Heart left ventricle (tissue), 16 donors: ENCODE measurements at regions of chr16 and their contacts with region 1.

Region 1: DNA sequence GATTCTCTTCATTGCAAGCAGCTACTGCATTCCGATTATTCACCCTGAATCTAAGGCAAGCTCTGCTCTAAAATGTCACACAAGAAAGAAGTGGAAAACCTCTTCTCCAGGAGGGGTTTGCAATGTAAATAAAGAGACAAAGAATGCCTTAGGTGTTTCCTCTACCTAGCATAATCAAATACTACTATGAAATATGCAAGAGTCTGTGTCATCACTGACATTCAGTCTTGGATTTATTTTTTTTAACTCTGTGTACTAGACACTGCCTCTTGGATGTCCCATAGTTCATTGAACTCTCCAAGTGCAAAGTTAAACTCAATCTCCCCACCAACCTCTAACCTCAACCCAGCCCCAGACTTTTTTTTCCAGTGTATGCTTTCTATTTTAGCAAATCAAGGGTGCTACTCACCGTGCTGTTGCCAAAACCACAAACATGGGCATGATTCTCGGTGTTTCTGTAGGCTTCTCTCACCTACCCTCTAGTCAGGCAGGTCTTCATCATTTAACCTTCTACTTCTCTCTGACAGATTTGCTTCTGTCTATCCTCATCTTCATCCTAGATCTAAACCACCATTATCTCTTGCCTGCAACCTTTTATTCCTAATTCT is 329.1 kb downstream of the CDH13 start:
- DNase-seq: no peak
- ATAC-seq: no peak
- H3K4me3 ChIP-seq: no peak overlapping the region
- H3K27ac ChIP-seq: no peak overlapping the region
- H3K4me1 ChIP-seq: peaks cover 0 to 8% (median 0%) of the 10 kb centered on the region in 12 donors
- H3K27me3 ChIP-seq: no peaks in the 10 kb centered on the region
- CTCF ChIP-seq: no peak
- POLR2A ChIP-seq: no peak

Region 2: GRCh38 chr16:82801361-82801760 is 154.5 kb before region 1 on chr16:
- intact Hi-C with region 1: no loop called
- DNase-seq: no peak
- ATAC-seq: no peak
- H3K4me3 ChIP-seq: no peak overlapping the region
- H3K27ac ChIP-seq: no peak overlapping the region
- H3K4me1 ChIP-seq: peaks cover 0 to 14% (median 2%) of the 10 kb centered on the region in 12 donors
- H3K27me3 ChIP-seq: no peaks in the 10 kb centered on the region
- CTCF ChIP-seq: no peak
- POLR2A ChIP-seq: no peak

Region 3: DNA sequence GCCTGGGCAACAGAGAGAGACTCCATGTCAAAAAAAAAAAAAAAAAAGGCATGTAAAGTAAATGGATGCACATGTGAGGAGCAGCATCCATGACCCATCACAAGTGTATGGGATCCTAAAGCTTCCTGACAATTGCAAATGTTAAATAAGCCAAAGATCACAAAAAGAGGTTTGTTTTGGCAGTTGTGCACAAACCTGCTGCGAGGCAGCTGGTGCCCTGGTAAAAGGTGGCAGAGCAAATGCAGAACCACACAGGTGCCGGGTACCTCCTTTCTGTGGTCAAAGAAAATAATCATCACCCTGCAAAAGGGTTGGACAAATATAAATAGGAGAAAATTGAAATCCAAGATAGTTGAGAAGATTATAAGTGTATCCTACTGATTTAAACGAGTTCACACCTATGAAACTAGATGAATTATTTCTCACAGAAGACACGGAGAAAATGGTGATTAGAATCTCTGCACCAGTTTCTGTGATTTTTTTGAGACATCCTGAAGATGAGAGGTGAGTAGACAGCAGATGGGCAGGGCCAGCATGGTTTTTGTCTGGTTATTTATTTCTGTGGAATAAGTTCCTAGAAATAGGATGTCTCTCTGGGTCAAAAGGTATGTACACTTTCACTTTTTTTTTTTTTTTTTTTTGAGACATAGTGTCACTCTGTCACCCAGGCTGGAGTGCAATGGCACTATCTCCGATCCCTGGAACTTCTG is 37.8 kb before region 1 on chr16:
- intact Hi-C with region 1: loop called in 1 of 10 experiments (anchors 5 kb)
- DNase-seq: no peak
- ATAC-seq: no peak
- H3K4me3 ChIP-seq: no peak overlapping the region
- H3K27ac ChIP-seq: no peak overlapping the region
- H3K4me1 ChIP-seq: peaks cover 0 to 15% (median 4%) of the 10 kb centered on the region in 12 donors
- H3K27me3 ChIP-seq: no peaks in the 10 kb centered on the region
- CTCF ChIP-seq: no peak
- POLR2A ChIP-seq: no peak